ENCODE measurements at regions of chr20 and their contacts with region 1.

Region 1: GRCh38 chr20:53578492-53579222 is 15.0 kb downstream of the ZNF217 start:
- DNase-seq: peak; percentile 75
- H3K4me3 ChIP-seq: peak overlapping the region in 1 of 3 experiments; percentile 16
- H3K27ac ChIP-seq: peak overlapping the region; percentile 76
- H3K4me1 ChIP-seq: peaks cover 41% of the 10 kb centered on the region
- H3K27me3 ChIP-seq: no peaks in the 10 kb centered on the region
- CTCF ChIP-seq: peak; percentile 71 to 81

Region 2: DNA sequence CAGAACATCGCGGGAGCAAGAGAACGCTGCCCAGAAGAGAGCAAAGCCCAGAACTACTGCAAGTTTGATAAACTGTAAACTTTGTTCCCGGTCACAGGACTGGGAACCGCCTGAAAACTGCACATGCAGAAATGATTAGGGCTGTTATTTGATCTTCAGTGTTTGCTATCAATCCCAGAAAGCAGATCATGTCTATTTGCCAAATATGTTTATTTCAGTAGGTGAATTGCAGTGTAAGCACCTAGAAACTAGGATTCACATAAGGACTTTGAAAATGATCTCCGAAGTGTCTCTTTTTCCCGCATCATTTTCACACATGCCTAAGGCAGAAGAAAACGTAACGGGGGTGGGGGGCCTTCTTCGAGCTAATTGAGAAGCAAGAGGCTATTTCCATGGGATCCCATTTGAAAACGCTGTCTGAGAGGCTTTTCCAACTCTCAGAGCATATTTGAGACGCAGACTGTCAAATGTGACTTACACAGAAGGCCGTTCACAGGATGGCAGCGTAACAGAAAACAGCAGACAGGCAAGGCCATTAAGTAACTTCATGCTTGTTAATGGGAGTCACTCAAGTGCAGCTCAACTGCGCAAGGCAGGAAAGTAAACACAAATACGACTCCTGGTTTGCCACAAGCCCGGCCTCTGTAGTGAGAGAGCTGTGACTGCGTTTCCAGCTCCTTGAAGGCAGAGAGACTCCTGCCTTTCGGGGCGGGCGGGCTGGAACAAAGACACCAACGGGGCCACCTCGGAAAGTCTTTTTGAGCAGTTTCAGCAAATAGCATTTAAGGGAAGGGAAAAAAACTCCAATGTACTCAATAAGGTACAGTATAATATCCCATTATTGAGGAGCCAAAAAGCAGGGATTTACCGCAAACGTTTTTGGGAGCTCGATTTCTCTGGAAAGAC is 159.6 kb after region 1 on chr20:
- CTCF ChIA-PET with region 1: interaction called, 5 read pairs
- dilution Hi-C with region 1: no loop called
- in situ Hi-C with region 1: no loop called
- intact Hi-C with region 1: loop called (anchors 5 kb)
- DNase-seq: peak; percentile 78
- H3K4me3 ChIP-seq: no peak overlapping the region
- H3K27ac ChIP-seq: no peak overlapping the region
- H3K4me1 ChIP-seq: peaks cover 29% of the 10 kb centered on the region
- H3K27me3 ChIP-seq: no peaks in the 10 kb centered on the region
- CTCF ChIP-seq: no peak

Region 3: DNA sequence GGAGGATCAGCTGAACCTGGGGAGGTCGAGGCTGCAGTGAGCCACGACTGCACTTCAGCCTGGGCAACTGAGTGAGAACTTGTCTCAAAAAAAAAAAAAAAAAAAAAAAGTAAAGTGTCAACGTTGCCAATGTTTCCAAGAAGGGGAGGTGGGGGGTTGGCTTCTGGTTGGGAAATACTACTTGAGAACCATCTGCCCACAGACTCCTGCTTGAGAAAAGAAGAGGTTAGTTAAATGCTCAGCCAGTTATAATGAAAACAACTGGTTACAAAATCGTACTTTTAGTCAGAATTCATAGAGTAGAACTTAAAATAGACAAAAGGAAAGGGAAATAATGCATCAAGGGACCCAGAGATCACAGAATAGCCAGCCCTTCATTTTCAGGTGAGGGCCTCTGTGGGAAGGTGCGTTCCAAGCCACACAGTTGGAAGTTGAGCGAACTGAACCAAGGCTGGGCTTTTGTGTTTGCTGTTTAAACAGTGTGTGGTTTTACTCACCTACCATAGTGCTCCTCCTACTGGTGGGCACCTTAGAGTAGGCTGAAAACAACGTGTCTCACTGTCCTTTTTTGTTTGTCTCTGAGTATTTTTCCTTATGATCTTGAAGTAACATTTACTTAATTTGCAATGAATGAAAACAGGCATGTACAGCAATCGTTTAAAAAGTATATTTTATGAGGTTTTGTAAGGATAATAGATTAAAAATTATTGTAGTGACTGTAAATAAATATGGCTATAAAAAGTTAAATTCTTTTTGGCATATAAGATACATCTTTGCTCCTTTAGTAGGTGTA is 291.0 kb after region 1 on chr20:
- CTCF ChIA-PET with region 1: no interaction called
- dilution Hi-C with region 1: no loop called
- in situ Hi-C with region 1: no loop called
- intact Hi-C with region 1: loop called (anchors 1 kb)
- DNase-seq: peak; percentile 81
- H3K4me3 ChIP-seq: no peak overlapping the region
- H3K27ac ChIP-seq: peak overlapping the region; percentile 74
- H3K4me1 ChIP-seq: peaks cover 56% of the 10 kb centered on the region
- H3K27me3 ChIP-seq: no peaks in the 10 kb centered on the region
- CTCF ChIP-seq: peak; percentile 91 to 94

Region 4: DNA sequence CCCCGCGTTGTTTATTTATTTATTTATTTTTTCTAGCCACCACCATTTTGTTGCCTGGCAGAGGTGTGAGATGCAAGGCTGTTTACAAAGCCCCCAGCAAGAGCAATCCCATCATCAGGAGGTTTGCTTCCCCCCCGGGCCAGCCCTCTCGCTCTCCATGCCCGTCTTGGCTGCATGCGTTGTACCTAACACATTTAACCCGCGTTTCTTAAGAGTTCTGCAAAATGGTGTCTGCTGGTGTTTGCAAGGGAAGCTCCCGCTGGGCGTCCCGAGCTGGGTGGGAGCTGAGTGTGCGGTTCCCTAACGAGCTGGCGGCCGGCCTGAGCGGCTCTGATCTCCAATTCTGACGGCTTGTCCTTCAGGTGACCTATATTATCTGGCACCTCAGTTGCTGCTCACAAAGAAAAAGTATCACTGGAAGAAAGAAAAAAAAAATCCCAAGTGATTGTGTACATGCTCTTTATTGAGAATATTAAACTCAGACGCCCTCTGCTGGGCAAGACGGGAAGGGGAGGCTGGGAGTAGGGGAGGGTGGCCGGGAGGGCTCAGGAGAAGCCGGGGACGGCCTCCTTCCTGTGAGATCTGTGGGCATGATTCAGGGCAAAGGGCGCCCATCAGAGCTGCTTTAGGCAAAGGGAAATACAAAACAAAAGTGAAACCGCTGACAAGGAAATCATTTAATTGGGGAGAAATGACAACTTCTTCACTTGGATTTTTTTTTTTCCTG is 337.0 kb after region 1 on chr20:
- CTCF ChIA-PET with region 1: interaction called, 6 read pairs
- dilution Hi-C with region 1: no loop called
- in situ Hi-C with region 1: no loop called
- intact Hi-C with region 1: loop called (anchors 1 kb)
- DNase-seq: peak; percentile 91
- H3K4me3 ChIP-seq: peak overlapping the region; percentile 42 to 50 (median 48)
- H3K27ac ChIP-seq: peak overlapping the region; percentile 76
- H3K4me1 ChIP-seq: peaks cover 46% of the 10 kb centered on the region
- H3K27me3 ChIP-seq: no peaks in the 10 kb centered on the region
- CTCF ChIP-seq: peak; percentile 82 to 86

Region 5: DNA sequence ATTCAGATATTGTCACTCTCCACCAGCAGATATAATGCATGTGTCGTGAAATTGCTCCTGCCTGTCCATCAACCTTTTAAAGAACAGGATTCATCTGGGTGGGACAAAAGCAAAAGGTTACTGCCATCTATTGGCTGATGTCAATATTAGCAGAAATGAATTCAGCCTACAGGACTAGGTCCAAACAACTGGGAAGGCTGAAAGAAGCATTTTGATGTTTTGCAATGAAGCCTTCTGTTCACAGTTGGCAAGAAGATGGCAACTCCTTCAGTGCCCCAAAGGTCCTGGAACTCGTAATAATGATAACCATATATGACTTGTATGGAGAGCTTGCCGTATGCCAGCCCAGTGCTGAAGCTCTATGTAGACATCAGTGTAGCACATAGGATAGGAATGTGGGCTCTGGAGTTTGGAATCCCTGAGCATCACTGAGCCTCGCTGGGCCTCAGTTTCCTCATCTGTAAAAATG is 484.2 kb after region 1 on chr20:
- CTCF ChIA-PET with region 1: no interaction called
- dilution Hi-C with region 1: no loop called
- in situ Hi-C with region 1: loop called (anchors 10 to 25 kb)
- intact Hi-C with region 1: loop called (anchors 1 kb)
- DNase-seq: peak; percentile 39
- H3K4me3 ChIP-seq: no peak overlapping the region
- H3K27ac ChIP-seq: no peak overlapping the region
- H3K4me1 ChIP-seq: peaks cover 10% of the 10 kb centered on the region
- H3K27me3 ChIP-seq: no peaks in the 10 kb centered on the region
- CTCF ChIP-seq: peak; percentile 67 to 77

Measured in mammary epithelial cell (primary cell).